ENCODE measurements at regions of chr16 and their contacts with region 1.

Region 1: DNA sequence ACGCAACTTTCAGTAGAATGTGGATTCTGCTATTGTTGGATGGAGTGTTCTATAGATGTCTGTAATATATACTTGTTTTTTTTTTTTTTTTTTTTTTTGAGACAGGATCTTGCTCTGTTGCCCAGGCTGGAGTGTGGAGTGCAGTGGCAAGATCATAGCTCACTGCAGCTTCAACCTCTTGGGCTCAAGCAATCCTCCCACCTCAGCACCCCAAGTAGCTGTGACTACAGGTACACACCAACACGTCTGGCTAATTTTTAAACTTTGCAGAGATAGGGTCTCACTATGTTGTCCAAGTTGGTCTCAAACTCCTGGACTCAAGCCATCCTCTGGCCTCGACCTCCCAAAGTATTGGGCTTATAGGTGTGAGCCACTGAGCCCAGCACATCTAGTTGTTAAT is 27.2 kb upstream of the CCL22 start:
- DNase-seq: no peak
- H3K4me3 ChIP-seq: no peak overlapping the region
- H3K27ac ChIP-seq: no peak overlapping the region
- H3K4me1 ChIP-seq: no peaks in the 10 kb centered on the region
- H3K27me3 ChIP-seq: no peaks in the 10 kb centered on the region
- CTCF ChIP-seq: no peak

Region 2: DNA sequence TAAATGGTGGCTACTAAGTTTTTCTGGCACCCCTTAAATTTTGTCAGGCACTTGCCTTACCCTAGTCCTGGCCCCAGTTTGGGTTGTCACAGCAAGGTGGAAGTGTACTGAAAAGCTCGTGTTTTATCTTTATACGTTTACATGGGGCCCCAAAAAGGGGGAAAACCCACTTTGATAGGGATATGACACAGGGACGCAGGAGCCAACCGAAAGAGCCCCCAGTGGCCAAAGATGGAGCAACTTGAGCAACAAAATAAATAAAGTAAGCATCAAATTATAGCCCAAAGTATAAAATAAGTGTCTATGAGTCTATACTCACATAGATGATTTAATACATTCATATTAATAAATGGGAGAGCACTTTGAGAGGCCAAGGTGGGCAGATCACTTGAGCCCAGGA is 374.6 kb before region 1 on chr16:
- CTCF ChIA-PET with region 1: no interaction called
- POLR2A ChIA-PET with region 1: interaction called, 10 read pairs
- intact Hi-C with region 1: no loop called
- DNase-seq: no peak
- H3K4me3 ChIP-seq: no peak overlapping the region
- H3K27ac ChIP-seq: no peak overlapping the region
- H3K4me1 ChIP-seq: no peaks in the 10 kb centered on the region
- H3K27me3 ChIP-seq: no peaks in the 10 kb centered on the region
- CTCF ChIP-seq: no peak

Region 3: GRCh38 chr16:57341441-57342303 is 10.3 kb after region 1 on chr16:
- CTCF ChIA-PET with region 1: interaction called, 22 read pairs
- POLR2A ChIA-PET with region 1: no interaction called
- intact Hi-C with region 1: no loop called
- DNase-seq: peak; percentile 89 to 100
- H3K4me3 ChIP-seq: peak overlapping the region; percentile 0; the same call in 1 of the 2 replicates
- H3K27ac ChIP-seq: peak overlapping the region; percentile 91
- H3K4me1 ChIP-seq: peaks cover 38% of the 10 kb centered on the region
- H3K27me3 ChIP-seq: no peaks in the 10 kb centered on the region
- CTCF ChIP-seq: no peak

Measured in PC-9 (cell line).